Tibial artery (tissue), 4 donors: ENCODE measurements at regions of chr2 and their contacts with region 1.

Region 1: DNA sequence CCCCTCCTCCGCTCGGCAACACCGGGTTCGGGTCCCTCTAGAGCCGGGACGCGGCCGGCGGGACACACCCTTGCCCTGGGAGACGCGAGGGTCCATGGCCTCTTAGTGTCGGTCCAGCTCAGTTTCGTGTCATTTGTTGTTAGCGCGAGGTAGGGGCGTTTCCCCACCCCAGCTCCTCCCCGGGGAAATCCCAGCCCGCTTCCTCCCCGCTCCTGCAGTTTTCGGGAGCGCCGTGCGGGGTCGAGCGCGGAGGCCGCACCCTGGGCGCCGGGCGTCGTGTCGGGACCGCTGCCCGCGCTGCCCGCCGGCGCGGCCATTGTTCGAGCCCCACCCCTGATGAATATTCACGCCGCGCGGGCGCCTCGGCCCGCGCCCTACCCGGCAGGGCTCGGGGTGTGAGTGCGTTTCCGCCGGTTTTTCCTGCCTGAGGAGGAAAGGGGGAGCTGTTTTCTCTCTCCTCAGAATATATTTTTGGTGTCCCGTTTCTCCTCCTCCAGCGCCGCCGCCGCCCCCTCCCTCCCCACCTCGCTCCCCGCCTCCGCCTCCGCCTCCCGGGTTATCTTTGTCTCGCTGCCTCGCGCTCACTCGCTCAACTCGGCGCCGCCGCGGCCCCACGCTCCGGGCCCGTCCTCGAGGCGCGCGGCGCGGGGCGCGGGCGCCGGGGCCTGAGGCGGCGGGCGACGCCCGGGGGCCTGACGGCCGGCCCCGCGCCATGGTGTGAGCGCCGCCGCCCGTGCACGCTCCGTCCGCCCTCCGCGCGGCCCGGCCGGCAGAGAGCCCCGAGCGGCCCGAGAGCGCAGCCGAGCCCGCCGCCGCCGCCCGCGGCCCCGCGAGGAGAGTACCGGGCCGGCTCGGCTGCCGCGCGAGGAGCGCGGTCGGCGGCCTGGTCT is at the start of gene MAP4K4:
- DNase-seq: peak; percentile 82 to 92
- H3K4me3 ChIP-seq: peak within 1 kb of the TSS; percentile 75 to 87
- H3K27ac ChIP-seq: peak within 1 kb of the TSS; percentile 82 to 93
- H3K4me1 ChIP-seq: peaks cover 0 to 35% (median 17%) of the 10 kb centered on the region in 4 donors
- H3K27me3 ChIP-seq: no peaks in the 10 kb centered on the region
- CTCF ChIP-seq: peak; percentile 24 to 34

Region 2: GRCh38 chr2:101518578-101519492 is 178.5 kb before region 1 on chr2:
- intact Hi-C with region 1: loop called (anchors 10 kb)
- DNase-seq: no peak
- H3K4me3 ChIP-seq: no peak overlapping the region
- H3K27ac ChIP-seq: no peak overlapping the region
- H3K4me1 ChIP-seq: peaks cover 0 to 17% (median 8%) of the 10 kb centered on the region in 4 donors
- H3K27me3 ChIP-seq: no peaks in the 10 kb centered on the region
- CTCF ChIP-seq: peak; percentile 31 to 38

Region 3: GRCh38 chr2:101751875-101752619 is 54.7 kb after region 1 on chr2:
- intact Hi-C with region 1: loop called (anchors 10 kb)
- DNase-seq: no peak
- H3K4me3 ChIP-seq: no peak overlapping the region
- H3K27ac ChIP-seq: peak overlapping the region; percentile 31 to 41
- H3K4me1 ChIP-seq: peaks cover 0 to 73% (median 48%) of the 10 kb centered on the region in 4 donors
- H3K27me3 ChIP-seq: no peaks in the 10 kb centered on the region
- CTCF ChIP-seq: no peak

Region 4: DNA sequence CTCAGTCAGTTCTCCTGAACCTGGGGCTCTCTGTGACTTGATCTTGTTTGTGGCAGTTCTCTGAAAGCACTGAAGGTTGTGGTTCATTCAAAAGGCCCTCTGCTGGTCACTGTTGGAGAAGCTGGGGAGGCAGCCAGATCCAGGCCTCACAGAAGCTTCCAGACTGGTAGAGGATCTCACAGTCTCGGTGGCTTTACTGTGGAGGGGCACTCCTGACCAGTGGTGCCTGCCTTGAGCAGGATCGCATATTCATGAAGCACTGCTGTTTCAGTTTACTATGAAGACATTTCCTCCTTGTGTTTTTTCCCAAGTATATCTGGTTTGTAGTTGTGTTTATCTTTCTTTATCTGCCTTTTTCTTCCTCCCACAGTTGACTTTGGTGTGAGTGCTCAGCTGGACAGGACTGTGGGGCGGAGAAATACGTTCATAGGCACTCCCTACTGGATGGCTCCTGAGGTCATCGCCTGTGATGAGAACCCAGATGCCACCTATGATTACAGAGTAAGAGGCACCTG is 134.0 kb after region 1 on chr2:
- intact Hi-C with region 1: loop called (anchors 5 kb)
- DNase-seq: peak; percentile 75 to 88
- H3K4me3 ChIP-seq: no peak overlapping the region
- H3K27ac ChIP-seq: peak overlapping the region; percentile 35 to 65
- H3K4me1 ChIP-seq: peaks cover 0 to 59% (median 41%) of the 10 kb centered on the region in 4 donors
- H3K27me3 ChIP-seq: no peaks in the 10 kb centered on the region
- CTCF ChIP-seq: peak; percentile 66 to 76

Region 5: DNA sequence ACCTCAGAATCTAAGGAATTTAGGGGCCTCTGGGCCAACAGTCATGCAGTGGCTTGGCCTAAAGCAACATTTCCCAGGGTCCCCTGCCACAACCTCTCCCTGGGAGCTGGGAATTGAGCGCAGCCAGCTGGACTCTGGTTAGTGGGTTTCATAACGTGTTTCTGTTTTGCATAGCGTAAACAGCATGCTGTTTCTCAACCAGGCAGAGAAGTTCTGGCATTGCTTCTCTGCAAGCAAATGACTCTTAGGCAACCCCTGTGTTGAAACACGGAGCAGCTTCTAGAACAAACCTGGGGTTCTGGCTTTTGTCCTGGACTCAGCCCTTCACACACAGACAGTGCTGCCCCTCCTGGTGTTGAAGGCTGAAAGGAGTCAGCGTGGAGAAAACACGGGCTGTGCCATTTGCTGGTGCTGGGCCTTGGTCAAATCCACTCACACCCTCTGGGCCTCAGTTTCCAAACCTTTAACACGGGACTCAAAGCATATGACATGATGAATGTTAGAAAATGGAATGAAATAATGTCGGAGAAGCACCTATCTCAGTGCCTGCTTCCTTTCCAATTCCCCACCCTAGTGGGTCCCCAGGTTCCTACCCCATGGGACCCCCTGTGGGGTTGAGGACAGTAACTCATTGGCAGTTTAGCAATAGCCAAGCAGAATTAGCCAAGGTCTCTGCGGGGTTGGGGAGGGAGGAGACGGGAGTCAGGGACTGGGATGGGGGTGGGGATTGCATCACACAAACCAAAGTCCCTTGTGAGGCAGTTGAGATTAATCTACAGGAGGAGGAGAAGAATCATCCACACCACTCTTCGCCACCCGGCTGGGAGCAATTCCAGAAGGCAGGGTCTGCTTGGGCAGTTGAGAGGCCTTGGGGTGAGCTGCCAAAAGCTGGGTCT is 264.2 kb after region 1 on chr2:
- intact Hi-C with region 1: loop called (anchors 5 kb)
- DNase-seq: peak; percentile 93 to 97
- H3K4me3 ChIP-seq: no peak overlapping the region
- H3K27ac ChIP-seq: peak overlapping the region; percentile 73 to 78
- H3K4me1 ChIP-seq: peaks cover 7 to 28% (median 22%) of the 10 kb centered on the region in 4 donors
- H3K27me3 ChIP-seq: no peaks in the 10 kb centered on the region
- CTCF ChIP-seq: peak; percentile 30 to 43